Sciatic nerve (tissue), 2 donors: ENCODE measurements at regions of chr12 and their contacts with region 1.

Region 1: DNA sequence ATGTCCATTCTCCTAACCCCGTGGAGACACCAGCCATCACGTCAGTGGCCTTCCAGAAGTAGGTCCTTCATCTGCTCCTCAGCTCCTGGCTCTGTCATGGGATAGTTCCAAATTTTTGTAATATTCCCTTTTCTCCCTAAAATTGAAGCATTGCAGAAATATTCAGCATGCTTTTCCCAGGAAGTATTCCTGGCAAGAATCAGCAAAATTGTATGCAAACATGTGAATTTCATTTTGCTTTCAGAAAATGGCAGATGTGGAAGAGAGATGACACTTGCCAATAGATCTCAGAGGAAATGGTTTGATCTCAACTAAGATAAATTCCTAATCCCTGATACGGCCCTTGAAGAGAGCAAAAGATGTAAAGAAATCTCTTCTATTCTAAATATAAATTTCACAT is 298.9 kb downstream of the ITPR2 start:
- DNase-seq: no peak
- ATAC-seq: no peak

Region 2: DNA sequence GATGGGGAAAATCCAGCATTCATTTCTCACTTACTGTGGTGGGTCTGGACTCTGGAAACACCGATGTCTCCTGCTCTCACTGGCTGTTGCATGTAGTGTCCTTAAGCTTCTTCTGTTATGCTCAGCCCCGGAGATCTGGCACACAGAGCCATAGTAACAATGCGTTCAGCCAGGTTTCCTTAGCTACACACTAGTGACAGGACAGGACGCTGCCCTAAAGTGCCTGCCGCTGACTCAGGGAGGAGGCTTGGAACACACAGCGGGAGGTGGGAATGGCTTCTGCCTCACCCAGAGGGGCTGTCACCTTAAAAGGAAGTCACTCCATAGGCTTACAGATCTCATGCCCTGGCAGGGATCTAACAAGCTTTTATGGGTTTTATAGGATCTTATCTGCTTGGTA is 885.6 kb before region 1 on chr12:
- intact Hi-C with region 1: loop called (anchors 5 kb)
- DNase-seq: no peak
- ATAC-seq: peak; percentile 62